ENCODE measurements at regions of chr10 and their contacts with region 1.

Region 1: GRCh38 chr10:132654702-132655661 is 117.4 kb downstream of the INPP5A start:
- H3K4me3 ChIP-seq: no peak overlapping the region
- H3K27ac ChIP-seq: no peak overlapping the region
- H3K4me1 ChIP-seq: no peaks in the 10 kb centered on the region
- CTCF ChIP-seq: peak; percentile 90

Region 2: DNA sequence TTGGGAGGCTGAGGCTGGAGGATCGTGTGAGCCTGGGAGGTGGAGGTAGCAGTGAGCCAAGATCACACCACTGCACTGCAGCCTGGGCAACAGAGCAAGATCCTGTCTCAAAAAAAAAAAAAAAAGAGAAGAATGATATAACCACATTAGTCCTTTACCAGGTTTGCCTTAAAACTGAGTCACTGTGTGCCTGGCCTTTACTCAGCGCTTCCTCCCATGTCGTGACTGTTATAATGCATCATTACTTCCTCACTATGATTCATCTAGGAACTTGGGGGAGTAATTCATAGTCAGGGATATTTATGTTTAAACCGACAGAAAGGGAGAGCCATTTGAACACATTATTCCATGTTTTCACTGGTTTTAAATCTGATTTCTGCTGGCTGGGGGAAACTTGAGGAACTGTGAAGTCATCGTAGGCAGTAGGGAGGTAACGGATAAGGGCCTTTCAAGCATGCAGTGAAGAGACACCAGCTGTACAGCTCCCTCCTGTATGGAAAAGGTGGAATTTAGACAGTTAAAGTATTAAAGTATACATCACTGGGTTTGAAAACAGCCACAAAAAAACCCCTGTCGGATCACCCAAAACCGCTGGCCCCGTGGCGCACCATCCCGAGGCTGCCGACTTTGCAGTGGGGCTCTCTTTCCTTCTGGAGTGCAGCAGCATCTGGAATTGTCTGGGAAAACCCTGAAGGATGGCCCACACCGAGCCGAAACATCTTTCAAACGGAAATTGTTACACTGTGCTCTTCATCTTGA is 11.1 kb after region 1 on chr10:
- CTCF ChIA-PET with region 1: interaction called, 24 read pairs
- POLR2A ChIA-PET with region 1: no interaction called
- H3K4me3 ChIP-seq: no peak overlapping the region
- H3K27ac ChIP-seq: no peak overlapping the region
- H3K4me1 ChIP-seq: no peaks in the 10 kb centered on the region; the same call in 1 of the 2 replicates
- CTCF ChIP-seq: no peak

Region 3: DNA sequence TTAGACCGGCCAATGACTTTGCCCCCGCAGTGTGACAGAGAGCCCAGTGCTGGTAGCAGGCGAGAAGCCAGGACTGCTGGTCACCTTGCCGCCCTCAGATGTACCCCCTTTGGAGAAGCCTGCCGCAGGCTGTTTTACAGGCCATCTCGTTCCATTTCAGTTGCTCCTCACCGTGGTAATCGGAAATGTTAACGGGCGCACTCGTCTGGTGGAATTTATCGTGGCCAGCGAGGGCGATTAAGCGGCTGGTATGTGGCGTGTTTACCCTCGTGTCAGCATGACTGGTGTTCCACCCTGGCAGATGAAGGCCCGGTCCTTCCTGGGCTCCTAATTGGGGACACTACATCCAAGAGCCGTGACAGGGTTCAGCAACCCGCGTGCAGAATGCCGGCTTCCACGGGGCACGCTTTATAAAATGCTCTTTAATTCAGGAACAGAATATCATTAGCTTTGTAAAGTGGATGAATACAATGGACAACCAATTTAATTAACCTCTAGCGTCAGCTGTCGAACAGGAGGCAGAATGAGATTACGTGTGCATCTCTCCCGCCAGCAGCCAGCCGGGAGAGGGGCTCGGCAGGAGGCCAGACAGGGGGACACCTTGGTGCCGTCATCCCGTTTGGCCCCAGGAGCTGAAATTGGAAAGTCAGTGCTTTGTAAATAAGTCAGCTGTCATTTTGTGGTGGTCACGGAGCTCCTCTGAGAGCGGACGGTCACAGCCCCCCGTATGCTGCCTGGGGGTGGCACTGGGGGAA is 22.7 kb after region 1 on chr10:
- CTCF ChIA-PET with region 1: no interaction called
- POLR2A ChIA-PET with region 1: no interaction called
- H3K4me3 ChIP-seq: no peak overlapping the region
- H3K27ac ChIP-seq: no peak overlapping the region
- H3K4me1 ChIP-seq: no peaks in the 10 kb centered on the region
- CTCF ChIP-seq: no peak